ENCODE measurements at regions of chr17 and their contacts with region 1.

Region 1: GRCh38 chr17:8409966-8410864 is 12.6 kb upstream of the RNF222 start:
- ATAC-seq: peak; percentile 90 to 99 (median 96)
- H3K4me3 ChIP-seq: no peak overlapping the region
- H3K27ac ChIP-seq: no peak overlapping the region
- H3K4me1 ChIP-seq: no peaks in the 10 kb centered on the region

Region 2: GRCh38 chr17:8630802-8631553 is 220.8 kb after region 1 on chr17:
- in situ Hi-C with region 1: loop called in 1 of 9 experiments (anchors 25 kb)
- ATAC-seq: peak; percentile 91 to 93 (median 92)
- H3K4me3 ChIP-seq: peak overlapping the region; percentile 59 to 97 (median 95)
- H3K27ac ChIP-seq: peak overlapping the region; percentile 89 to 97
- H3K4me1 ChIP-seq: peaks cover 11 to 19% of the 10 kb centered on the region in 2 donors

Region 3: GRCh38 chr17:8745586-8746500 is 335.6 kb after region 1 on chr17:
- in situ Hi-C with region 1: loop called in 5 of 9 experiments (anchors 10 to 25 kb)
- ATAC-seq: peak; percentile 80 to 98 (median 96)
- H3K4me3 ChIP-seq: peak overlapping the region; percentile 36 to 44 (median 42)
- H3K27ac ChIP-seq: no peak overlapping the region
- H3K4me1 ChIP-seq: no peaks in the 10 kb centered on the region

Region 4: DNA sequence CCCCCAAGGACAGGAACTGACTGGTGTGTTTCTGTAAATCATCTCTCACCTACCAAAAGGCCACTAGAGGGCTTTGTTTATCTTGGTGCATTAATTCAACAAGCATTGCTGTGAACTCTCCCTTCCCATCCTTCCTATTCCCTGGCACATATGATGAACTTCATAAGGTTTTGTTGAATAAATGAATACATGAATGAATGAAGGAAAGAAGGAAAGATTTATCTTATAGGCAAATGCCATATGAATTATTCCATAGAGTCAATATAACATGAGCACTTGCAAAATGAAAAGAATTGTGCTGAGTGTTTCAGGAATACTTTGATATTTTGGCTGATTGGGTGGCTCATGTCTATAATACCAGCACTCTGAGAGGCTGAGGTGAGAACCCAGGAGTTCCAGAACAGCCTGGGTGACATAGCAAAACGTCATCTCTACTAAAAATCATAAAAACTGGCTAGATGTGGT is 343.8 kb after region 1 on chr17:
- in situ Hi-C with region 1: loop called in 5 of 9 experiments (anchors 10 to 25 kb)
- ATAC-seq: peak in 3 of 8 experiments; percentile 31 to 76 (median 46)
- H3K4me3 ChIP-seq: no peak overlapping the region
- H3K27ac ChIP-seq: no peak overlapping the region
- H3K4me1 ChIP-seq: no peaks in the 10 kb centered on the region

Region 5: DNA sequence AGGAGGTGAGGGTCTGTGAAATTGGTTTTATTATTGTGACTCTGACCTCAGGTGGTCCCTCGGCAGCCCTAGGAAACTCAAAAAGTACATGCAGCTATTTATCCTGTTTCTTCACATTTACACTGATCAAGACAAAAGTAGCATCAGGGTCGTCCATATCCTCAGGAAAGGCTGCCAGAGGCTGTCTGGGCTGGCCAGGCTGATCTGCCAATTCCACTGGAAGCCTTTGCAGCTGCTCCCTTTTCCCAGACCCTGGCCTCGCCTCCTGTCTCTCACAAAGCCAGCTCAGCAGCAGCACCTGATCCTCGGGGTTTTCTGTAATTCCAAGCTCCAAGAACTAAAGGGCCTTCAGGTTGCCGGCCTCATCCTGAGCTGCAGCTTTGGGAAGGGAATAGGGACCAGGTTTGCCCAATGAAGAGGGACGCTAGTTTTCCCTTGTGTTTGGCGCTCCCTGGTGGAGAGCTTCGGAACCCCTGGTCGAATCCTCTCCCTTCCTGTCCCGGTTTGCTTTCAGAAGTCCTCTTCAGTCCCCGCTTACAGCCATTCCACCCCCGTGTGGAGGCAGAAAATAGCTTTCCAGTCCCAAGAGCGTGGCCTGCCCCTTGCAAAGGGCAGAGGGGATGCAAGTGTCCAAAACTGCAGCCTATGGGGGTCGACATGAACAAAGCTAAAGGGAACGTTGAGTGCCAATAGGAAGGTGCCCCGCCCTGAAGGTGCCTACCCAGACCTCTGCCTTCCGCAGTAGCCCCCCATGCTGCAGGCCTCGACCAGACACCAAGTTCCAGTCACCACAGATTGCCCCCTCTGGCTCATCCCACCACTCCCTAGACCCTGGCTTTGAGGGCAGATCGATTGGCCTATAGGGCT is 375.6 kb after region 1 on chr17:
- in situ Hi-C with region 1: loop called in 3 of 9 experiments (anchors 25 kb)
- ATAC-seq: peak; percentile 81 to 100 (median 90)
- H3K4me3 ChIP-seq: no peak overlapping the region
- H3K27ac ChIP-seq: no peak overlapping the region
- H3K4me1 ChIP-seq: no peaks in the 10 kb centered on the region

Region 6: DNA sequence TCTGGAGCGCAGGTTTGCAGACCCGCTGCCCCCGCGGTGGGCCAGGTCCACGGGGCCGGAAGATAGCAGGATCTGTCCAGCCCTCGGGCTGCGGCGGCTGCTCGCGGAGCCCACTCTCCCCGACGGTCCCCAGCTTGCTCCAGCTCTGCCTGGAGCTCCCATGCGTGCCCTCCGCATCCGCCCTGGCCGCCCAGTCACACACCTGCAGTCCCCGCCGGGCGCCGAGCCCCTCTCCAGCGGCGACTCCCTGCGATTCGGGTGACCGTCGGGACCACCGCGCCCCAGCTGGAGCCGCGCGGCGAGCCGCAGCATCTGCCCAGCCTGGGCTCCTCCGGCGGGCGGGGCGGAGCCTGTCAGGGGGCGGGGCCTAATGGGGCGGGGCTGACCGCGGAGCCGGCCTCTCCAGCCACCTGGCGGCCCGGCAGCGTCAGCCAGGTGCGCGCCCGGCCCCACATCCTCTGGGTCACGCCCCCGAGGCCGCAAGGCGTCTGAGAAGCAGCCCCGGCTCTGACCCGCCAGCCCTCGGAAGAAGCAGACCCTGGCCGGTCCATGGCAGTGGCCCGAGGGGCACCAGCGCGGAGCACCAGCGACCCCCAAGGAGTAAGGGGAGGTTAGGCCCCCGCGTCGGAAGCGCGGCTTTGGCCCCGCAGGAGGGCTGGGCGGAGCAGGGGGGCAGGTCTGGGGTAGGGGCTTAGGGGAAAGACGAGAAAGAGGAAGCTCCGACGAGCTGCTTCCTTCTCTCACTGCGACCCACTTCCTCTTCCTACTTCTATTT is 555.4 kb after region 1 on chr17 and contains the start of gene PIK3R5:
- in situ Hi-C with region 1: no loop called
- ATAC-seq: peak in 7 of 8 experiments; percentile 34 to 72 (median 67)
- H3K4me3 ChIP-seq: peak within 1 kb of the TSS; percentile 14 to 33 (median 22)
- H3K27ac ChIP-seq: no peak within 1 kb of the TSS
- H3K4me1 ChIP-seq: peaks cover 4 to 13% of the 10 kb centered on the region in 2 donors
- total RNA-seq, gene PIK3R5: 0.27 to 1.7 (median 0.86) TPM

Measured in motor neuron (in vitro differentiated cells).